PC-3 (cell line): ENCODE measurements at regions of chr12 and their contacts with region 1.

Region 1: DNA sequence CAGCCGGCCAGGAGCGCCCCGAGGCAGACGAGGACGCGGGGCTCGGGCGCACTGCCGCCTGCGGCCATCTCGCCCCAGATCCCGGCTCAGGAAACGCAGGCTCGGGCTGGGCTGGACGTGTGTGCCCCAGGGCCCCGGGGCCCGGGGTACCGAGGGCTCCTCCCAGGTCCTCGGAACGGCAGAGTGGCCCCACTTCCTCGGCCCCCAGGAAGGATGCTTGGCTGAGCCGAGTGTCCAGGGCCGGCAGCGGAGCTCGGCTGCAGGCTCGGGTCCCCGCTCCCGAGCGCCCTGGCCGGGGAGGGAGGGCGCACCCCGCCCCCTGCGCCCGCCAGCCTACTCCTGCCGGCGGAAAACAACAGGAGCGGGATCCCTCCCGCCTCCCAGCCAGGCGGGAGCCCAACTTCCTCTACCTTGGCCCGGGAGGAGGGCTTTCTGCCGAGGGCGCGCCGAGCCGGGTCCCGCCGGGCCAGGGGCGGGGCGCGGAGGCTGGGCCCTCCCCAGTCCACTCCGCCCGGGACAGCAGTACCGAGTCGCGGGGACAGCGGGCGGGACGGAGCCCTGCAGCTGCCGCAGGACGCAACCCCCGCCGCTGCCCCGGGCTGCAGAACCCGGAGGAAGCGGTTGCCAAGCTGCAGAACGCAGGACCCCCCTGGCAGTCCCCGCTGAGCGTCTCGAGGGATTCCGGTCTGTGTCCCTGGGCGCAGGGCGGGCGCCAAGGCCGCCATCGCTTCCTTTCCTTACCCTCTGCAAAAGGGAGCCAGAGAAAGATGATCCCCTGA is at the start of gene VSIG10:
- DNase-seq: peak; percentile 90
- ATAC-seq: peak; percentile 82
- H3K4me3 ChIP-seq: peak within 1 kb of the TSS; percentile 94
- H3K27ac ChIP-seq: peak within 1 kb of the TSS; percentile 38
- H3K4me1 ChIP-seq: peaks cover 21% of the 10 kb centered on the region
- H3K27me3 ChIP-seq: no peaks in the 10 kb centered on the region
- CTCF ChIP-seq: no peak
- total RNA-seq, gene VSIG10: 60.8 and 68.8 TPM in 2 replicates

Region 2: DNA sequence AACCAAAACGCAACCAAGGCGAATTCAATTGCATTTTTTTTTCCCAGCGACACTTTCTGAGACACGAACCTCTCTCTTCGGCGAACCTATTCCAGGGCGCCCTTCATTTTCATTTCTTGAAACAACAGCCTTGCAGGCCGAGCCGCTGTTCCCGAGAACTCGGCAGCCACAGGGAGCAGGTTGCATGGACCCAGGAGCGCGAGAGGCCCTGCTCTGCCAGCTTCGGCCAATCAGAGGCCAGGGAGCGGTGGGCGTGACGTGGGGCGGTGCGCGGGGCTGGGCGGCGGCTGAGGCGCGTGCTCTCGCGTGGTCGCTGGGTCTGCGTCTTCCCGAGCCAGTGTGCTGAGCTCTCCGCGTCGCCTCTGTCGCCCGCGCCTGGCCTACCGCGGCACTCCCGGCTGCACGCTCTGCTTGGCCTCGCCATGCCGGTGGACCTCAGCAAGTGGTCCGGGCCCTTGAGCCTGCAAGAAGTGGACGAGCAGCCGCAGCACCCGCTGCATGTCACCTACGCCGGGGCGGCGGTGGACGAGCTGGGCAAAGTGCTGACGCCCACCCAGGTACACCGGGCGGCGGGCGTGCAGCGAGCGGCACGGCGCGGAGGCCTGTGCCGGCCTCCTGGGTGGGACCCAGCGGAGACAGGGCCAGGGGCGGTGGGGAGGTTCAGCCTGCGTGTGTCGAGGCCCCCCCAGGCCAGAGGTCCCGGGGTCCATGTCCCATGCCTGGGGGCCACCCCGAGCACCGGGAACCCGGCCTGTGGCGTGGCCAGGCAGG is 32.2 kb after region 1 on chr12 and contains the start of gene PEBP1:
- CTCF ChIA-PET with region 1: no interaction called
- POLR2A ChIA-PET with region 1: no interaction called
- intact Hi-C with region 1: loop called (anchors 2 kb)
- DNase-seq: peak; percentile 95
- ATAC-seq: peak; percentile 97
- H3K4me3 ChIP-seq: peak within 1 kb of the TSS; percentile 97
- H3K27ac ChIP-seq: 0 out of 2 replicates have a peak within 1 kb of the TSS, but pooled peaks have one; percentile 1
- H3K4me1 ChIP-seq: peaks cover 28% of the 10 kb centered on the region
- H3K27me3 ChIP-seq: no peaks in the 10 kb centered on the region
- CTCF ChIP-seq: no peak
- total RNA-seq, gene PEBP1: 313 and 368 TPM in 2 replicates